ENCODE measurements at regions of chr3 and their contacts with region 1.

Region 1: DNA sequence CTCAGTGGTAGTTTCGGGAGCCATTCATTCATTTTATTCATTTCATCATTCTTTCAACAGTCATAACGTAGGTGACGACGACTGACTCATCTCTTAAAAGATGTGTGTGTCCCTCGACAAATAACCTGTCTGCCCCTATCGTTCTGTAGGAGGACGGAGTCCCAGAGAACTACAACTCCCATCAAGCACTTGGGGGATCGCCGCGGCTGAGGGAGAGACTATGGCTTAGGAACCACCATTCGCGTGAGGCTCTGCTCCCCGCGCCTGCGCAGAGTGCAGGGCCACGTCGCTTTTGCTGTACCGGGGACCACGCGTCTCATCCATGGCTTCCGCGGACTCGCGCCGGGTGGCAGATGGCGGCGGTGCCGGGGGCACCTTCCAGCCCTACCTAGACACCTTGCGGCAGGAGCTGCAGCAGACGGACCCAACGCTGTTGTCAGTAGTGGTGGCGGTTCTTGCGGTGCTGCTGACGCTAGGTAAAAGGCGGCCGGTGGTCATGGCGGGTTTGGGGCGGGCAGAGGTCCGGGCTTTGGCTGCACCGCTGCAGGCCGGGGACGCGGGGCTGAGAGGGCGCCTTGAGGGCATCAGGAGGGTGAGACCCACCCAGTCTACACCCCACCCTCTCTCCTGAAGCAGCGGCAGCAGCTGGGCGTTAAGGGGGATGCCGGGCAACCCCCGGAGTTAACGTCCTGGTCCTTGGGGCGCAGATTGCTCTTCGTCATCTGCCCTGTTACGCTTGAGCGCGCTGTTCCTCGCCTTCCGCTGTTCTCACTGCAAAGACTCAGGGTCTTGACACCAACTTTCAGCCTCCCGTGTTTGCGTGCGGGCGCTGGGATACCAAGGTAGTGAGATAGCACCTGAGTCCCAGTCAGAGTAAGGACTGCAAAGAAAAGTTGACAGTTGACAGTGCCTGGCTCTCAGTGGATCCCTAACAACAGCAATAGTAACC is at the start of gene SRPRB:
- DNase-seq: peak; percentile 98
- H3K4me3 Mint-ChIP-seq: peak within 1 kb of the TSS; percentile 99
- H3K27ac Mint-ChIP-seq: peak within 1 kb of the TSS; percentile 98
- H3K4me1 Mint-ChIP-seq: peaks cover 17% of the 10 kb centered on the region
- H3K27me3 Mint-ChIP-seq: peaks cover 16% of the 10 kb centered on the region
- total RNA-seq, gene SRPRB: 97.7 and 103 TPM in 2 replicates

Region 2: DNA sequence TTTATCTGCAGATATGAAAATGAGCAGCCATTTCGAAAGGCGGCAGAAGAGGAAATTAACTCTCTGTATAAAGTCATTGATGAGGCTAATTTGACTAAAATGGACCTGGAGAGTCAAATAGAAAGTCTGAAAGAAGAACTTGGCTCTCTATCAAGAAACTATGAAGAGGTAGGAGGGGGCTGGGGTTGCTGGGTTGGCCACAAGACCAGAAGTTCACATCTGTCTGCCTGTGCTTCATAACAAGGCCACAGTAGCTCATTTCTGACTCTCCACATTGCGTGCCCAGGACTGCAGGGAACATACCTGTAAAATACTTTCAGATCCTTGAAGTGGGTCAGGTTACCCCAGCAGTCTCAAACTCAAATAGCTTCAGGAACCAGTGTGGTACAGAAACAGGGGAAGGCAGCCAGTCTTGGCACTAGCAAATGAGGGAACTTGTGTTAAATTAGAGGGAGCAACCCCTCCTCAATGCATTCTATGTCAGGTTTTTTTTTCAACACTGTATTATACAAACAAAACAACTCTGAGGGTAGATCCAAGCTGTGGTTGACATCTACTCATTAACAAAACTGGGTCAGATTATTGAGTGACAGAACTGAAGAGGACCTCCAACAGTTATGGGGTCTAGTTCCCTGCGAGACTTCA is 357.2 kb before region 1 on chr3:
- intact Hi-C with region 1: loop called (anchors 5 kb)
- DNase-seq: peak; percentile 75
- H3K4me3 Mint-ChIP-seq: no peak overlapping the region
- H3K27ac Mint-ChIP-seq: peak overlapping the region; percentile 69
- H3K4me1 Mint-ChIP-seq: peaks cover 26% of the 10 kb centered on the region
- H3K27me3 Mint-ChIP-seq: peaks cover 3% of the 10 kb centered on the region

Region 3: GRCh38 chr3:133494469-133494868 is 311.3 kb before region 1 on chr3:
- intact Hi-C with region 1: loop called (anchors 5 kb)
- DNase-seq: no peak
- H3K4me3 Mint-ChIP-seq: no peak overlapping the region
- H3K27ac Mint-ChIP-seq: no peak overlapping the region
- H3K4me1 Mint-ChIP-seq: peaks cover 33% of the 10 kb centered on the region
- H3K27me3 Mint-ChIP-seq: no peaks in the 10 kb centered on the region

Region 4: GRCh38 chr3:133591271-133591742 is 214.5 kb before region 1 on chr3:
- intact Hi-C with region 1: no loop called
- DNase-seq: no peak
- H3K4me3 Mint-ChIP-seq: no peak overlapping the region
- H3K27ac Mint-ChIP-seq: no peak overlapping the region
- H3K4me1 Mint-ChIP-seq: peaks cover 27% of the 10 kb centered on the region
- H3K27me3 Mint-ChIP-seq: no peaks in the 10 kb centered on the region

Region 5: DNA sequence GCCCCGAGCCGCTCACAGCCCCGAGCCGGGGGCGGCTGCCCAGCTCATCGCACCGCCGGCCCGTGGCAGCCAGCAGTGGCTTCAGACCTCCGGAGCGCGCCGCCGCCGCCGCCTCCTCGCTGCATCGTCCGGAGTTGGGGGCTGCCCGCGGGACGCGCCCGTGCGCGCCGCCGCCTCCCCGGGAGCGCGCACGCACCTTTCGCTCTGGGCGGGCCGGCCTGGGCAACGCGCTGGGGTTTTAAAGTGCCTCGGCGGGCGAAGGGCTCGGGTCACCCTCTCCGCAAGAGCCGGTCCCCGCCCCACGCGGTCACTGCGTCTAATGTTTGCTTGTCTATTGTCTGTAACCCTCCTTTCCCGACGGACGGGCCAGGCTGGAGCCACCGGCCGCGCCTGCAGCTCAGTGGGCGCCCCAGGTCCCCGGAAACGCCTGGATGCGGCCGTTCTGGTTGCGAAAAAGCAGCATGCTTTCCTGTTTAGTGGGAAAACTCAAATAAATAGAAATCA is 445.0 kb after region 1 on chr3 and contains the start of gene RYK:
- intact Hi-C with region 1: loop called (anchors 5 kb)
- DNase-seq: peak; percentile 93
- H3K4me3 Mint-ChIP-seq: peak within 1 kb of the TSS; percentile 90
- H3K27ac Mint-ChIP-seq: peak within 1 kb of the TSS; percentile 93
- H3K4me1 Mint-ChIP-seq: peaks cover 29% of the 10 kb centered on the region
- H3K27me3 Mint-ChIP-seq: peaks cover 50% of the 10 kb centered on the region
- total RNA-seq, gene RYK: 17.2 and 19.9 TPM in 2 replicates